ENCODE measurements at regions of chr3 and their contacts with region 1.

Region 1: DNA sequence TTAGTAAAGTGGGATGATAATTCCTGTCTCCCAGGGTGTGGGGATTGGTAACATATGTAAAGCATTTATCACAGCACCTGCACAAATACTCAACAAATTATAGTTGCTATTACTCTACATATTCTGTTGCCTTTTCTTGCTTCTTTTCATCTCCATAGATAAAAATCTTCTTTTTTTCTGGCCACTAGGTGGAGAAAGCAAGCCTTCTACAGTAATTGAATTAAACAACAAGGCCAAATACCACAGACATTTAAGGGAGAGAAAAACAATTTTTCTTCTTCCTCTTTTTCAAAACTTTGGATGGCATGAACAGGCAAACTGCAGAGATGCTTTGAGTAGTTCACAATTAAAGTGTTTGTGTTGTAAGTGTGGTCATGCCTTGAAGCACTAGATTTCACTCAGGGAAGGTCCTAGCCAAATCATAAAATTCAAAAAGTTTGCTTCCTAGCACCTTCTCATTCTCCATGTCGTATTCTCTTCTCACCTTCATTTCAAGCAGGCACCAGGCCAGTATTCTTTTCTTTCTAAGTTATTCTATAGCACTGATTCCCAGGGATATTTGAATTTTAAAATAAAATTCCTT is 493.4 kb upstream of the TGFBR2 start:
- DNase-seq: no peak
- ATAC-seq: peak; percentile 56 to 72 (median 63)
- H3K4me3 ChIP-seq: no peak overlapping the region
- H3K27ac ChIP-seq: no peak overlapping the region
- H3K4me1 ChIP-seq: no peaks in the 10 kb centered on the region
- H3K27me3 ChIP-seq: no peaks in the 10 kb centered on the region
- CTCF ChIP-seq: peak; percentile 58 to 72 (median 68)
- POLR2A ChIP-seq: no peak

Region 2: DNA sequence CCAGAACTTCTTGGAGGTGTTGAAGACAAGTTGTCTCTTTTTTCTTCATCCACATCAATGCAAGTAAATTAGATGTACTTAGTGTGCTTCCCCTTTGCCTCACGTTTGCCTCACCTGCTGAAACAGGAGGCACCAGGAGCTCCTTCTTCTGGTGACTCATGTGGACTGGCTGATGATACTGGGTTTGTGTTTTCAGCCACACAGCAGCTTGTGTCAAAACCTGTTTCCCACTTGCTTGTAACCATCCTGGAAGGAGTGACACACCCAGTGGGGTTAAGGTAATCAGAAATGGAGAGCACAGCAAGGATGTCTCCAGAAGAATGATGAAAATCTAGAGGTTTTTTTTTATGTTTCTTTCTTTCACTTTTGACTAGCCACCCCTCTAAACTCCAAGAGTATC is 975.4 kb before region 1 on chr3:
- intact Hi-C with region 1: no loop called
- DNase-seq: no peak
- ATAC-seq: no peak
- H3K4me3 ChIP-seq: no peak overlapping the region
- H3K27ac ChIP-seq: no peak overlapping the region
- H3K4me1 ChIP-seq: no peaks in the 10 kb centered on the region
- H3K27me3 ChIP-seq: no peaks in the 10 kb centered on the region
- CTCF ChIP-seq: no peak
- POLR2A ChIP-seq: no peak

Region 3: DNA sequence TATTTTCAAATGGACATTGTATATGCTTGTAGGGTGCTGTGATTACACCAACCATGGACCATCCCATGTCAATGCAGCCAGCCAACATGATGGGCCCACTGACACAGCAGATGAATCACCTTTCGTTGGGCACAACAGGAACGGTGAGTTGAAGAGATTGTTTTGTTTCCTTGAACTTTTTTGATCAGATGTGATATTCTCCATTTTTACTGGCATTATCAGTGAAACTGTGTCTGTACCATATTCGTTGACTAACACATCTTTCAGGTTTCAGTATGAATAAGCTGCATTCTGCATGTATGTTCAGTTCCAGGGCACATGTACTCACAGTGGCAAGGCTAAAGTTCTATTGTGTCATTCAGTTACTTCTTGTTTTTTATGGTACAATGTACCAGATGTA is 176.9 kb before region 1 on chr3:
- intact Hi-C with region 1: no loop called
- DNase-seq: no peak
- ATAC-seq: no peak
- H3K4me3 ChIP-seq: no peak overlapping the region
- H3K27ac ChIP-seq: no peak overlapping the region
- H3K4me1 ChIP-seq: no peaks in the 10 kb centered on the region
- H3K27me3 ChIP-seq: no peaks in the 10 kb centered on the region
- CTCF ChIP-seq: no peak
- POLR2A ChIP-seq: no peak

Region 4: DNA sequence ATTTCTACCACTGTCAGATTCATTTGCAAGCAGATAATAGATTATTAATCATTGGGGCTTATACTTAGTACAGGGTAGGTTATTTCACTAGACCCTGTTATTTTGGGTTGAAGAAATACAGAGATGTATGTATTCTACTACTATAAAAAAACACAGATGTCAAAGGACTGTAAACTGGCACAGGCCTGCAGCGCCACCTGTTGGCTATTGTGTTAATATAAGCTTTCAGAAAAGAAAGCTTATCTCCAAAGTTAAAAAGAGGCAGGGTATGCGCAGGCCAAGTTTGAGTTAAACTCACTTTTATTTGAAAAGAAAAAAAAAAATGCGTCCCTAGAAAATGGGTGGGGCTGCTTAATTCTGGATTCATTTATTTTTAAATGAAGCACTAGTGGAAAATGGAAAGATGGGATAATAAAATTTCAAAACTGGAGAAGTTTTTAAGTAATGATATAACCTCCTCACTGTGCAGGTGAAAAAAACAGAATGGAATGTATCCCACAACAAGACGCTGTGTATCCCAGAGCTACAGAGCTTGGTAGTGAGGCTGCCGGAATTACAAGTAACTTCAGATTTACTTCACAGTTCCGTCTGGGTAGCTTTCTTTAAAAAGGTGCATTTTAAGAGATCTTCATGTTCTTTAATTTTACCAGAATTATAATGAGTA is 86.2 kb after region 1 on chr3:
- intact Hi-C with region 1: loop called in 1 of 2 experiments (anchors 10 kb)
- DNase-seq: peak; percentile 61 to 71 (median 69)
- ATAC-seq: peak; percentile 73 to 85 (median 82)
- H3K4me3 ChIP-seq: no peak overlapping the region
- H3K27ac ChIP-seq: no peak overlapping the region
- H3K4me1 ChIP-seq: no peaks in the 10 kb centered on the region
- H3K27me3 ChIP-seq: no peaks in the 10 kb centered on the region
- CTCF ChIP-seq: peak; percentile 82 to 92 (median 87)
- POLR2A ChIP-seq: no peak

Region 5: DNA sequence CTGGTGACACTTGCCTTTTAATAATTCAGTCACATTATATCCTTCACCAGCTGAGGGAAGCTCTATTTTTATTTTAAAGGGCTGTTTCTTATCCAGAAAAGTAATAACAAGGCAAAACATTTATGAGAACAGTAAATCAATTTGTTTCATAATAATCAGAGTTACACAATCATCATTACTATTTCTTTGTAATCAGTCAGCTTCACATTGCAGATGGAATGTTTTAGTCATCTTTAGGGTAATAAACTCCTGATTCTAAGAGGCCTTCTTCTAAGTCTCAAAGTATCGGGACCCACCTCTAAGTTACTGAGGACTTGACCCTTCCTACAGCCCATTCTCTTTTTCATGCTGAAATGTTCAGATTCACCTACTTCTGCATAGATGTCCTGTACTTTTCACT is 195.1 kb after region 1 on chr3:
- intact Hi-C with region 1: no loop called
- DNase-seq: no peak
- ATAC-seq: peak in 3 of 4 donors; percentile 24 to 45 (median 26)
- H3K4me3 ChIP-seq: no peak overlapping the region
- H3K27ac ChIP-seq: peak overlapping the region in 2 of 3 donors; percentile 2 to 48
- H3K4me1 ChIP-seq: peaks cover 0 to 30% (median 7%) of the 10 kb centered on the region in 4 donors
- H3K27me3 ChIP-seq: no peaks in the 10 kb centered on the region
- CTCF ChIP-seq: no peak
- POLR2A ChIP-seq: no peak